Heart right ventricle (tissue), 16 donors: ENCODE measurements at regions of chr9 and their contacts with region 1.

Region 1: GRCh38 chr9:106503759-106504158 is 359.2 kb upstream of the ZNF462 start:
- DNase-seq: no peak
- ATAC-seq: no peak
- H3K4me3 ChIP-seq: no peak overlapping the region
- H3K27ac ChIP-seq: no peak overlapping the region
- H3K4me1 ChIP-seq: no peaks in the 10 kb centered on the region
- H3K27me3 ChIP-seq: no peaks in the 10 kb centered on the region
- CTCF ChIP-seq: no peak

Region 2: DNA sequence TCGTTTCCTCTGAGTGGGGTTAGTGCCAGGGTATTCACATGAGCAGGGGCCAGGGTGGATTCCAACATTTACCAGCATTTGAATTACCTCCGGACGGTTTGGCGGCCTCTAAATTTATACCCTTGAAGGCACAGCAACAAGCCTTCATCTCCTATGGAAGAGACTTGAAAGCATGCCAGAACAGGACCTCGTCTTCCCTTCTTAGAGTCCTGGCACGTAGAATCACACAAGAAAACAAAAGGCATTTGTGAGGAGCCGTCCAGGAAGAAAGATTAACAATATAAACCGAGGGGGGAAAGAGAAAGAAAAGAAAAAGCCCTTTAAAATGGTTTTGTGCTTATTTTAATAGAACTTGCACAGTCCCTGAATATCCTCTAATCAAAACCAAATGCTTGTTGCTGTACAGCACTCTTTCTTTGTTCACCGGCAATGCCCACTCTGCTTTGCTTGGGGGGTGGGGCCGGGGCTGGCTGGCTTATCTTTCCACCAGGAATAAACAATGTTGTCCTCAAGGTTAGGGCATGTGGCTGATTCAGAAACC is 216.6 kb before region 1 on chr9:
- intact Hi-C with region 1: no loop called
- DNase-seq: no peak
- ATAC-seq: peak in 1 of 8 donors; percentile 33
- H3K4me3 ChIP-seq: peak overlapping the region in 7 of 10 donors; percentile 13 to 41 (median 37)
- H3K27ac ChIP-seq: peak overlapping the region in 2 of 10 donors; percentile 31 to 34
- H3K4me1 ChIP-seq: peaks cover 0 to 16% (median 11%) of the 10 kb centered on the region in 9 donors
- H3K27me3 ChIP-seq: no peaks in the 10 kb centered on the region
- CTCF ChIP-seq: no peak

Region 3: GRCh38 chr9:106487266-106487665 is 16.5 kb before region 1 on chr9:
- intact Hi-C with region 1: loop called in 1 of 10 experiments (anchors 1 kb)
- DNase-seq: no peak
- ATAC-seq: no peak
- H3K4me3 ChIP-seq: no peak overlapping the region
- H3K27ac ChIP-seq: no peak overlapping the region
- H3K4me1 ChIP-seq: peaks cover 0 to 14% (median 7%) of the 10 kb centered on the region in 9 donors
- H3K27me3 ChIP-seq: no peaks in the 10 kb centered on the region
- CTCF ChIP-seq: no peak